Caco-2 (cell line): ENCODE measurements at regions of chr15 and their contacts with region 1.

Region 1: GRCh38 chr15:74433592-74434262 is at the start of gene SEMA7A:
- DNase-seq: peak; percentile 76 to 82
- H3K4me3 ChIP-seq: peak within 1 kb of the TSS; percentile 94
- H3K4me3 Mint-ChIP-seq: peak within 1 kb of the TSS; percentile 68
- H3K27ac Mint-ChIP-seq: peak within 1 kb of the TSS; percentile 83
- H3K4me1 ChIP-seq: peaks cover 17% of the 10 kb centered on the region
- H3K4me1 Mint-ChIP-seq: peaks cover 38% of the 10 kb centered on the region
- H3K27me3 ChIP-seq: no peaks in the 10 kb centered on the region
- H3K27me3 Mint-ChIP-seq: no peaks in the 10 kb centered on the region
- CTCF ChIP-seq: no peak
- total RNA-seq, gene SEMA7A: 31.4 and 38.1 TPM in 2 replicates

Region 2: DNA sequence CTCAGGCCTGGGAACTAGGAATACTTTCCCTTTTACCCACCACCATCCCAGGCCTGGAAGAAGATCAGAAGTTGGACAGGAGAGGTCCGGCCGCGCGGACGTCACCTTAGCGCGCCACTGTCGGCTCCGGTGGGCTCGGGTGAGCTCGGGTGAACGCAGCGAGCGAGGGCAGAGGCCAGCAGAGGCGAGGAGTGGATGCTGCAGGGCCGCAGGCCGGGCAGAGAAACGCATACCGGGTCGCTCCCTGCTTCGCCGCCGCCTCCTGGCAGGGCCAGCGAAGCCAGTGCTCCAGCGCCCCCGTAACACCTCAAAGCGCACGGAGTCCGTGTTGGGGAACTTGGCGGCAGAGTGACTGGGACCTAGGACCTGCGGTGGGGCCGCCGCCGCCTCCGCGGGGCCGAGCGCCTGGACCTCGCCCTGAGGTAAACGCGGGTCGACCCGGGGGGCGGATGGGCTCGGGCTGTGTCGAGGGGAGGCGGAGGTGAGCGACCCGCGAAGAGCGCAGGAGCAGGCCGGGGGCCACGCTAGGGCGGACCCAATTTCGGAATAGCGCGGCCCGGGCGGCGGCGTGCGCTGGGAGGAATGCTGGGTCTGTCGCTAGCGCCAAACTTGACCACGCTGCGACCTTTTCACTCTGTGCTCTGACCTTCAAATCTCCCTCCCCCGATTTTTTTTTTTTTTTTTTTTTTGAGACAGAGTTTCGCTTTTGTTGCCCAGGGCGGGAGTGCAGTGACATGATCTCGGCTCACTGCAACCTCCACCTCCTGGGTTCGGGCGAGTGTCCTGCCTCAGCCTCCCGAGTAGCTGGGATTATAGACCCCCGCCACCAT is 67.9 kb before region 1 on chr15:
- CTCF ChIA-PET with region 1: no interaction called
- POLR2A ChIA-PET with region 1: no interaction called
- intact Hi-C with region 1: no loop called
- DNase-seq: no peak
- H3K4me3 ChIP-seq: no peak overlapping the region
- H3K4me3 Mint-ChIP-seq: no peak overlapping the region
- H3K27ac Mint-ChIP-seq: no peak overlapping the region
- H3K4me1 ChIP-seq: no peaks in the 10 kb centered on the region
- H3K4me1 Mint-ChIP-seq: no peaks in the 10 kb centered on the region
- H3K27me3 ChIP-seq: no peaks in the 10 kb centered on the region
- H3K27me3 Mint-ChIP-seq: peaks cover 6% of the 10 kb centered on the region
- CTCF ChIP-seq: no peak

Region 3: GRCh38 chr15:74482661-74483060 is 48.9 kb after region 1 on chr15:
- CTCF ChIA-PET with region 1: interaction called, 3 read pairs
- POLR2A ChIA-PET with region 1: no interaction called
- intact Hi-C with region 1: loop called (anchors 5 kb)
- DNase-seq: peak in 1 of 2 experiments; percentile 24
- H3K4me3 ChIP-seq: no peak overlapping the region
- H3K4me3 Mint-ChIP-seq: no peak overlapping the region
- H3K27ac Mint-ChIP-seq: no peak overlapping the region
- H3K4me1 ChIP-seq: no peaks in the 10 kb centered on the region
- H3K4me1 Mint-ChIP-seq: no peaks in the 10 kb centered on the region
- H3K27me3 ChIP-seq: no peaks in the 10 kb centered on the region
- H3K27me3 Mint-ChIP-seq: no peaks in the 10 kb centered on the region
- CTCF ChIP-seq: peak; percentile 11 to 40